ENCODE measurements at regions of chr9 and their contacts with region 1.

Region 1: DNA sequence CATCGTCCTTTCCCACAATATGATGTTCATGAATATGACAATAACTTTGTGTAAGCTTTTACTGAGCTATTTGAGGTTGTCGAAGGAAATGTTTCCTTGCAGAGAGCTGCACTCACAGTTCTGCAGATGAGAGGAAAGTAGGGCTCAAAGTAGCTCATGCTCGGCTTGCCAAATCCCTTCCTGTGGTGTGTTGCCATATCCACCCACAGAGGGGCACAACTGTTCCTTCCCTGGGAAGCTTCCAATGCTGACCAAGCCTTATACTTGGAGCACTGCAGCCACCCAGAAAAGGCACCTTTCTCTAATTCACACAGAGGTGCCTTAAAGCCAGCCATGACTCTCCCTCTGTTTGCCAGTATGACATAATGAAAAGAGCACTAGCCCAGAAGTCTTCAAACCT is 390.3 kb downstream of the CAAP1 start:
- DNase-seq: no peak
- ATAC-seq: no peak
- H3K4me3 ChIP-seq: no peak overlapping the region
- H3K27ac ChIP-seq: no peak overlapping the region
- H3K4me1 ChIP-seq: no peaks in the 10 kb centered on the region
- H3K27me3 ChIP-seq: no peaks in the 10 kb centered on the region

Region 2: DNA sequence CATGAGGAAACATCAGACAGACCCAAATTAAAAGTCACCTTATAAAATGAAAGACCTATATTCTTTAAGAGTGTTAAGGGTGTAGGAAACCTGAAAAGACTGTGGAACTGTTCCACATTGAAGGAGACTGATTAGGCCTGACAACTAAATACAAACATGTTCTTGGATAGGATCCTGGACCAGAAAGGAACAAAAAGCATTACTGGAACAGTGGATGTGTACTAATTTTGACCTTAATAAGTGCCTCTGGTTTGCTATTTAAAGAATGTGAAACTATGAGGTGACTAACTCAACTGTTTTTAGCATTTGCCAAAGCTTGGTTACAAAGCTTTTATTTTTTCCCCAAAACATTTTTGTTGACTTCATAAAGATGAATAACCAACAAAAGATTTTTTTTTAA is 49.7 kb after region 1 on chr9:
- intact Hi-C with region 1: loop called in 1 of 2 experiments (anchors 10 kb)
- DNase-seq: no peak
- ATAC-seq: peak; percentile 76
- H3K4me3 ChIP-seq: no peak overlapping the region
- H3K27ac ChIP-seq: peak overlapping the region; percentile 79 to 82
- H3K4me1 ChIP-seq: peaks cover 3 to 4% of the 10 kb centered on the region in 2 donors
- H3K27me3 ChIP-seq: no peaks in the 10 kb centered on the region

Region 3: GRCh38 chr9:26606756-26607155 is 104.4 kb after region 1 on chr9:
- intact Hi-C with region 1: loop called in 1 of 2 experiments (anchors 5 kb)
- DNase-seq: no peak
- ATAC-seq: no peak
- H3K4me3 ChIP-seq: no peak overlapping the region
- H3K27ac ChIP-seq: no peak overlapping the region
- H3K4me1 ChIP-seq: no peaks in the 10 kb centered on the region
- H3K27me3 ChIP-seq: no peaks in the 10 kb centered on the region

Region 4: DNA sequence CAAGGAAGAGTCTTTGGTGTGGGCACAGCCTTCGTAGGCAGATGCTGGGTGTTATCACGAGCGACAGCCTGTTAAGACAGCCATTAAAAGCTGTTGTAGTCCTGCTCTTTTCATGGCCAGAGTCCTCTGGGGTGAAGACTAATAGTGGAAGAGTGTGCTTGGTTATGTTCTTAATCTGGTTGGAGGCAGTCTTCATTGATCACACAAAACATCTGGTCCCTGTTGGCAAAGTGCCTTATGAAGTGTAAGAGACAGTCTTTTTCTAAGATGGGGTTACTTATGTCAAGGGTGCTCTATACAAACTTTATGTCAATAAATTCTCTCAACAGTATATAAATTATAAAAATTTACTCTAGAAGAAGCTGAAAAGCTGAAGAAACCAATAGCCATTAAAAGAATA is 109.9 kb after region 1 on chr9:
- intact Hi-C with region 1: loop called (anchors 2 to 5 kb)
- DNase-seq: no peak
- ATAC-seq: no peak
- H3K4me3 ChIP-seq: no peak overlapping the region
- H3K27ac ChIP-seq: no peak overlapping the region
- H3K4me1 ChIP-seq: no peaks in the 10 kb centered on the region
- H3K27me3 ChIP-seq: no peaks in the 10 kb centered on the region

Region 5: DNA sequence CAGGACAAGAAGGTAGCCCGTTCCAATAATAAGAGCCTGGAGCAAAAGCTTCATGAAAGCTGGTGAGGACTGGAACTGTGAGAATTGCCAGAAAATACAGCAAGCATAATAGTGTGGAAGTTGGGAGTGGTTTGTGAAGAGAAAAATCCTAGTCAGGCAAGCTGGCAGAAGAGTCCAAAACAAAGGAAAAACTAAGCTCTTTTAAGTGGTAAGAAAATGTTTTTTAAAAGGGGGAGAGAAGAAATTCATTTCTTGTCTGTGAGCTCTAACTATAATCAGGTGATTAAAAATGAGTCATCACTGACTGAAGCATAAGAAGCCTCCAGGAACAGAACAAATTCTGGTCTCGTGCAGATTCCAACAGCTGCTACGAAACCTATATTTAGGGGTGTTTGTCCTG is 287.6 kb after region 1 on chr9:
- intact Hi-C with region 1: no loop called
- DNase-seq: no peak
- ATAC-seq: no peak
- H3K4me3 ChIP-seq: no peak overlapping the region
- H3K27ac ChIP-seq: no peak overlapping the region
- H3K4me1 ChIP-seq: no peaks in the 10 kb centered on the region
- H3K27me3 ChIP-seq: no peaks in the 10 kb centered on the region